Right ventricle myocardium inferior (tissue), 1 donor: ENCODE measurements at regions of chr1 and their contacts with region 1.

Region 1: GRCh38 chr1:110780600-110781484 is 92.1 kb upstream of the CD53 start:
- DNase-seq: peak; percentile 67
- ATAC-seq: peak; percentile 51

Region 2: DNA sequence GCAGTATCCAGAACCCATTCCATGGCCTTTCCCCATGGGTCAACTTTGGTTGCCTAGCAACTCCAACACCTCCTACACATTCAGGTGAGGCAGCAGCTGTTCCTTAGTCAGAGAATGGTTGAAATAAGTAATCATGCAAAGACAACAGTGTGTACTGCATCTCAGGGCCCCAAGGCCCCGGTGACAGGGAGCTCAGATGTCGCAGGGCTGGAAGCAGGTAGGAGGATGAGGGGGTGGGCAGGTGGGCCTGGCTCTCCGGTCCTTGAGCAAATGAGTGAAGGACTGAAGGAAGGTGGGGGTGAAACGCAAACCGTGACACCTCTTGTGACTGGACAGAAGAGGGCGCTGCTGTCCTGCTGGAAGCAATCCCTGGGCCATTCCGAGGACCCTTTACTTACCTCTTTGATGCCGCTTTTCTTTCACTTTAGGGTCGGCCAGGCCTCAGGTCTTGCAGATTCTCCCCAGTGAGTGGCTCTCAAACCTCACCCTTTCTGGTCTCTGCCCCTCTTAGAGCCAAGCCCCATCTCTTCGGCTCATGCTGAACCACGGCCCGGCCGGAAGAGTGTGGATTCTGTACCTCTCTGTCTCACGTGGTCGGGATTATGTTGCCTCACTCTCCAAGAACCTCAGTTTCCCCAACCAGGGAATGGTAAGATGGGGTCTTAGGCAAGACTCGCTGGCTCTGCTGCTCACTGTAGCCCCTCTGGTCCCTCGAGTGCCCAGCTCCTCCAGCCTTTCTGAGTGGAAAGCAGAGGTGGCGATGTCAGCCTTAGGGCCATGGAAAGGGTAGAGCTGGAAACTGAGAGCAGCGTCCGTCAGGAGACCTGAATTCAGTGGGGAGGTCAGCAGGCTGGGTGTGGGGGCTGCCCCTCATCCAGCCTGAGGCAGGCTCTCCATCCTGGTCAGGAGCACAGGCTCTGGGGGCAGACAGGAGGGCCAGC is 256.3 kb before region 1 on chr1:
- intact Hi-C with region 1: loop called (anchors 10 kb)
- DNase-seq: no peak
- ATAC-seq: peak; percentile 55

Region 3: GRCh38 chr1:110554871-110555801 is 225.7 kb before region 1 on chr1:
- intact Hi-C with region 1: loop called (anchors 10 kb)
- DNase-seq: peak; percentile 78
- ATAC-seq: peak; percentile 85

Region 4: DNA sequence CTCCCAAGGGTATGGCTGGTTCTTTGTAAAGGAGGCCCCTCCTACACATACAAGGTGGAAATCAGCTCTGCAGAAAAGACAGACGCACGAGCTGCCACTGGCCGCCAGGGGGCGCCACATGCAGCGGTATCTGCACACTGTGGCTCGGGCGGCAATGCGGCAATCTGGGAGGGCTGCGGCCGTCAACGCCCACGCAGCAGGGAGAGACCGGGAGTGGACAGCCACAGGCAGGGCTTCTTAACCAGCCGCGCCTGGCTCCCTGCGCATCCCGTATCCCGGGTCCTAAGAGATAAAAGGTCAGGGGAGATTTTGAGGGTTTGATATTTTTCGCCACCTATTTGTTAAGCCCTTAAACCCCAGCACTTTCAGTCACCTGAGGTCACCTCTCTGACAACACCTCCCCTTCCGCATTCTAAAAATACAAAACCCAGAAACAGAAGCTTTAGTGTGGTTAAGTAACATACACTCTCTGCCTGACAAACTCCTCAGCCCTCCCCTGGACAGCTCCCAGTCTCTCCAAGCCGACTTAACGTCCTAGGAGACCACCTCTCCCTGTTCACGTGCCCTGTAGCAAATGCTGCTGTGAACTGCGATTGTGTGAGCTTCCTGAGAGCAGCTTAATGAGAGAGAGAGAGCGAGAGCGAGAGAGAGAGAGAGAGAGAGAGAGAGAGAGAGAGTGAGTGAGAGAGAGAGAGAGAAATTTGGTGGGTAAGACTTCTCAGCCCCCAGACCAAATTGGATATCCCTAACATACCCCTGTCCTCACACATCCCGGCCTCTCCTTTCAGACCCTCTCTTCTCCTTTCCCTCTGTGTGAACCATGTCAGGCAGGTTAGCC is 161.2 kb before region 1 on chr1:
- intact Hi-C with region 1: loop called (anchors 1 kb)
- DNase-seq: peak; percentile 92
- ATAC-seq: peak; percentile 85

Region 5: GRCh38 chr1:110630839-110631663 is 149.8 kb before region 1 on chr1:
- intact Hi-C with region 1: loop called (anchors 5 kb)
- DNase-seq: peak; percentile 85
- ATAC-seq: peak; percentile 41

Region 6: GRCh38 chr1:110798691-110799256 is 17.9 kb after region 1 on chr1:
- intact Hi-C with region 1: no loop called
- DNase-seq: no peak
- ATAC-seq: no peak